AG04450 (cell line): ENCODE measurements at regions of chr2 and their contacts with region 1.

Region 1: GRCh38 chr2:24768601-24769000 is 24.6 kb downstream of the PTRHD1 start:
- DNase-seq: no peak
- H3K4me3 ChIP-seq: no peak overlapping the region
- H3K27ac ChIP-seq: no peak overlapping the region
- H3K27me3 ChIP-seq: no peaks in the 10 kb centered on the region
- CTCF ChIP-seq: no peak

Region 2: GRCh38 chr2:24203029-24203786 is 565.4 kb before region 1 on chr2:
- CTCF ChIA-PET with region 1: no interaction called
- POLR2A ChIA-PET with region 1: interaction called, 10 read pairs
- DNase-seq: no peak
- H3K4me3 ChIP-seq: no peak overlapping the region
- H3K27ac ChIP-seq: no peak overlapping the region
- H3K27me3 ChIP-seq: no peaks in the 10 kb centered on the region
- CTCF ChIP-seq: no peak

Region 3: GRCh38 chr2:24898122-24899021 is 129.8 kb after region 1 on chr2:
- CTCF ChIA-PET with region 1: no interaction called
- POLR2A ChIA-PET with region 1: no interaction called
- DNase-seq: no peak
- H3K4me3 ChIP-seq: no peak overlapping the region
- H3K27ac ChIP-seq: no peak overlapping the region
- H3K27me3 ChIP-seq: no peaks in the 10 kb centered on the region
- CTCF ChIP-seq: no peak